Right cardiac atrium (tissue), 5 donors: ENCODE measurements at regions of chr22 and their contacts with region 1.

Region 1: GRCh38 chr22:32265882-32266767 is 11.0 kb upstream of the SLC5A4 start:
- DNase-seq: peak; percentile 66 to 83 (median 72)
- ATAC-seq: peak; percentile 36 to 74
- H3K4me3 ChIP-seq: no peak overlapping the region
- H3K27ac ChIP-seq: no peak overlapping the region
- H3K4me1 ChIP-seq: no peaks in the 10 kb centered on the region
- H3K27me3 ChIP-seq: no peaks in the 10 kb centered on the region

Region 2: DNA sequence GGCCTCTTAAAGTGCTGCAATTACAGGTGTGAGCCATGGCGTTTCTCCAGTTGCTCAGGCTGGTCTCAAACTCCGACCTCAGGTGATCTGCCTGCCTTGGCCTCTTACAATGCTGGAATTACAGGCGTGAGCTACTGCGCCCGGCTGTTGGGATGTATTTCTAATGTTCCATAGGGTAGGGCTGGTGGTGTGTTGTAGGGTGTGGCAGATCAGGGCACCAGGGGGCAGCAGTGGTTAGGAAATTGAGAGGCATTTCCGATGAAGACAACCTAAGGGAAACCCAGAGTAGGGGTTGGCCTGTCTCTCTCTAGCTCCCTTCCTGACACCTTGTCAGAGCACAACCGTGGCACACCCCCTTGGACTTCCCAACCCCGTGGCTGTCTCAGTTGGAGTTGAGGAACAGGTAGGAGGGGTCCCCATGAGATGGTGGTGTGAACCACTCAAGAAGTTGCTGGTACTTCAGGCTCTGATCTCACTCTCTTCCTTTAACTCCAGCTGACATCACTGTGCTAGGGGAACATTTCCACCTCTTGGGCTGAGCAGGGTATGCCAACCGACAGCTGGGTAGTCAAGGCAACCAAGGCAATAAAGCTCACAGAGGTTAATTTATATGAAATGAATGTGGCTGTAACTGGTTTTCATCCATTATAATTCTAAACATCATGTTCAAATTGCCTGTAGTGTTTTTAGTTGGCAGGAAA is 288.8 kb before region 1 on chr22:
- intact Hi-C with region 1: loop called (anchors 5 to 10 kb)
- DNase-seq: peak; percentile 70 to 92 (median 85)
- ATAC-seq: peak; percentile 87
- H3K4me3 ChIP-seq: no peak overlapping the region
- H3K27ac ChIP-seq: no peak overlapping the region
- H3K4me1 ChIP-seq: no peaks in the 10 kb centered on the region
- H3K27me3 ChIP-seq: no peaks in the 10 kb centered on the region

Region 3: DNA sequence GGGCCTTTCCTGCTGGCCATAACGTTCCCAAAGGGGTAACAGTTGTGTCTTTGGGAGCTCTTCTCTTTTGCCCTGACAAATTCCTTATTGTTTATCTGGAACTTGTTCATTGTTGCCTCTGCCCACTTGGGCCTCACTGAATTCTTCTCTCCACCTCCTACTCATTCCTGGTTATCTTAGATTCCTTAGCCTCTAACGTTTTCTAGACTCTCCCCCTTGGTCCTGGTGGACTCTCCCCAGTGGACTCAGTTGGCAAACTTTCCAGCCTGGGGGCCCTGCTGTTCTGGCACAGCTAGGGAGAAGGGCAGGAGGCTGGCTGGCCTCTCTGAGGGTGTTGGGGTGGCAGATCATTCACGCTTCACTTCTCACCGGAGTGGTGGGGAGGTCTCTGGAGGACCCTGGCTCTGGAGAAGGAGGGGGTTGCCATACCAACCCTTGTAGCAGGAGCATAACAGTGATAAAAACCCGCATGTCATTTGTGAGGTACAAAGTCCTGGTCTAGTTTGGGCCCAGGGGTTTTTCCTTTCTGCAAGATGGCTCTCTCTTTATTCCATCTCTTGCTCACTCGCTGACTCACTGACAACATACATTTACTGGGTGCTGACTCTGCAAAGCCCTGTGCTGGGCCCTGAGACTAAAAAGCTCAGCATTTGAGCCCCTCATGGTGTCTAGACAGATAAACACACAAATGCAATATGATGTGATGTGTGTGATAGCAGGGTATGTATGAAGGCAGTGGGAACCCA is 282.0 kb before region 1 on chr22:
- intact Hi-C with region 1: loop called in 3 of 4 experiments (anchors 5 to 10 kb)
- DNase-seq: no peak
- ATAC-seq: no peak
- H3K4me3 ChIP-seq: no peak overlapping the region
- H3K27ac ChIP-seq: no peak overlapping the region
- H3K4me1 ChIP-seq: no peaks in the 10 kb centered on the region
- H3K27me3 ChIP-seq: no peaks in the 10 kb centered on the region

Region 4: DNA sequence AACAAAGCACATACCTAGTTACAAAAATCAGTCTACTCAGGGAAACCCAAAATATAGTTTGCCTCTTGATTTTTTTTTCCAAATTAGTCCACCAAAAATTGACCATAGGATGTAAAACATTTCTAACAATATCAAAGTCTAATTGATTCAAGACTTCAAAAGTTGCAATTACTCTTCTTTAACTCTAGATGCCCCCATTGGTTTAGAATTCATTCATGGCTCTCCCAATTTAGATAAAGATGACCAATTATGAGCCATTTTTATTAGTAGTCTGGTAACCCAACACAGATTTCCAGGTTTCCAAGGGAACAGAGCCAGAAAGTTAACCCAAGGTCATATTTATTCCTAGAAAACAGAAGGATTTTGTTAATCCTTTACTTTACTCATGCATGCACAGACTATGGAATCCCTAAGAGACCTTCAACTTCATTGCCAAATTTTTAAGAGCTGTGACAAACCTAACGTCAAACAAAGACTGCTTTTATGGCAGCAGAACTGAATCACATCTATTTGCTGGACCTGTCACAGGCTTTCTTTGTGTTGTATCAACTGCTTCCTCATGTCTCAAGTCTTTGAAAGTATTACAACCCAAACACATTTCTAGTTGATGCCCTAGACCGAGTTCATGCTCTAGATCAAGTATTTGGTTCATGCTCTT is 162.3 kb before region 1 on chr22:
- intact Hi-C with region 1: loop called in 2 of 4 experiments (anchors 5 to 10 kb)
- DNase-seq: no peak
- ATAC-seq: no peak
- H3K4me3 ChIP-seq: no peak overlapping the region
- H3K27ac ChIP-seq: no peak overlapping the region
- H3K4me1 ChIP-seq: no peaks in the 10 kb centered on the region
- H3K27me3 ChIP-seq: no peaks in the 10 kb centered on the region

Region 5: GRCh38 chr22:32202539-32203180 is 63.5 kb before region 1 on chr22:
- intact Hi-C with region 1: no loop called
- DNase-seq: peak in 1 of 3 donors; percentile 67
- ATAC-seq: peak; percentile 30 to 45
- H3K4me3 ChIP-seq: no peak overlapping the region
- H3K27ac ChIP-seq: no peak overlapping the region
- H3K4me1 ChIP-seq: no peaks in the 10 kb centered on the region
- H3K27me3 ChIP-seq: no peaks in the 10 kb centered on the region

Region 6: DNA sequence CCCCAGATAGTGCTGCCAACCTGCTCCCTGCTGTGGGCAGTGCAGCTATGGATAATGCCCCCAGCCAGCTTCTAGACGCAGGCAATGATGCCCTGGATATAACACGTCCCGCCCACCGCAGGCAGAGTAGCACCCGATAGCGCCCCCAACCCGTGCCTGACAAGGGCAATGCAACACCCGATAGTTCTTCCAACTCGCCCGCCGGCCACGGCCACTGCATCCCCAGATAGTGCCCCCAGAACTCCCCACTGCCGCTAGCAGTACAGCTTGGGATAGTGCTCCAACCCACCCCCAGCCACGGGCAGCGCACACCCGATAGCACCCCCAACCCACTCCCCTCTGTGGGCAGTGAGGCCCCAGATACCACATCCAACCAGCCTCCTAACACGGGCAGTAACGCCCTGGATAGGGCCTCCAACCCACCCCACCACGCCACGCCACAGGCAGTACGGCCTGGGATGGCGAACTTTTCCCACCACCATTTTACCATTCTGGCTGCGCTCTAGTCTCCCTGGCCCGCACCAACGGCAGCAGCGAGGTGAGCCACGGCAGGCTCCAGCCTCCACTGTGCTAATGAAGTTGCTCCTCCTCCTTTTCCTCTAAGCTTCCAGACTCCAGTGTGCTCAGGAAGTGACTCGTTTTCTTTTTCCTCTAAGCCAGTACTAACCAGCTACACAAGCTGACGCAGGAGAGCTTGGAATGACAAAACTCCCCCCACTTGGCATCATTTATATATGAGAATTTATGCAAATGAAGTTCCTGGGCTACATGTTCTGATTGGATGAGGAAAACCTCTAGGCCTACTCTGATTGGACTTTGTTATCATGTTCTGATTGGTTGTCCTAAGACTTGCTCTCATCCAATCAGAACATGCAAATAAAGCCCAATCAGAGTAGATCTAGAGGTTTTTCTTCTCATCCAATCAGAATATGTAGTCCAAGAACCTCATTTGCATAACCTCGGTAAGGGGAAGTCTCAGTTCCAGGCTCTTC is 88.5 kb after region 1 on chr22:
- intact Hi-C with region 1: no loop called
- DNase-seq: no peak
- ATAC-seq: peak; percentile 30 to 49
- H3K4me3 ChIP-seq: no peak overlapping the region
- H3K27ac ChIP-seq: no peak overlapping the region
- H3K4me1 ChIP-seq: no peaks in the 10 kb centered on the region
- H3K27me3 ChIP-seq: no peaks in the 10 kb centered on the region